OCI-LY7 (cell line): ENCODE measurements at regions of chr3 and their contacts with region 1.

Region 1: DNA sequence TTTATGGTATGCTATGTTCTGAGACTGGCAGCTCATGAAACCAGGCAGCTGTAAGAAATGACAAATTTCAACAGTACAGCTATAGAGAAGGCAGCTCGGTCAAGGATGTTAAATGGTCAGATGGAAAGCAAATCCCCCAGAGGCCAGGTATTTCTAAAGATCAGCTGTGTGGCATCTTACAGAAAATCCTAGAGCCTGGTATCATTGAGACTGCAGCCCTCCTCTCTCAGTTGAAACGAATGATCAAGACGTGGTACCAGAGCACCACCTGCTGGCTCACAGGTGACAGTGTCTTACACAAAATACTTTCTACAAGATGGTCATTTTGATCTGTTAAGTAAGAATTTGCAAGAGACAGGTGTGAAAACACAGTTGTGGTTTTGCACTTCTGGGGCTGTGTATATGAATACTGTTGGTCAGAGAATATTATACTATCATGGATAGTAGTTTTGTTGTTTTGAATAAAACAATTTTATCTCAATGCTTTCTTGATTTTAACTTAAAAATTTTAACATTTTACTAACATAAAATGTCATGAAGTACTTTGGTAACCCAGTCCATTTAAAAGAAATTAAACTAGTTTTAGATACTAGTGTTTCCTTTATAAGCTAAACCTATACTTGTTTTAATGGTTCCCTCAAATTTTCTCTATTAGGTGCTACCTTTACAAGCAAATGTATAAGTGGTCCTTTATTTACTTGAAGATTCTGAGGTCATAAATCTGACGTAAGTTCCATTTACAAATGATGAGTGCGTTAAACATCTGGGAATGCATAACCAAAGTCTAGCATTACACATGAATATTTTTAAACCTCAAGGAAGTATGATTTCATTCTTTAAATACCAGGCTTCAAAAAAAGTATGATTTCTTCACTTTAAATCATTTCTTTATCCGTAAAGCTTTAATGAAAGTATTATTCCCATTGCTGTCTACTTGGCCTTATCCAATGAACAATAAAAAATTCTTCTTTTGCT is 121.8 kb downstream of the PDZRN3 start:
- DNase-seq: peak; percentile 68
- H3K4me3 ChIP-seq: no peak overlapping the region
- H3K27ac ChIP-seq: no peak overlapping the region
- H3K4me1 ChIP-seq: no peaks in the 10 kb centered on the region
- CTCF ChIP-seq: peak; percentile 89

Region 2: DNA sequence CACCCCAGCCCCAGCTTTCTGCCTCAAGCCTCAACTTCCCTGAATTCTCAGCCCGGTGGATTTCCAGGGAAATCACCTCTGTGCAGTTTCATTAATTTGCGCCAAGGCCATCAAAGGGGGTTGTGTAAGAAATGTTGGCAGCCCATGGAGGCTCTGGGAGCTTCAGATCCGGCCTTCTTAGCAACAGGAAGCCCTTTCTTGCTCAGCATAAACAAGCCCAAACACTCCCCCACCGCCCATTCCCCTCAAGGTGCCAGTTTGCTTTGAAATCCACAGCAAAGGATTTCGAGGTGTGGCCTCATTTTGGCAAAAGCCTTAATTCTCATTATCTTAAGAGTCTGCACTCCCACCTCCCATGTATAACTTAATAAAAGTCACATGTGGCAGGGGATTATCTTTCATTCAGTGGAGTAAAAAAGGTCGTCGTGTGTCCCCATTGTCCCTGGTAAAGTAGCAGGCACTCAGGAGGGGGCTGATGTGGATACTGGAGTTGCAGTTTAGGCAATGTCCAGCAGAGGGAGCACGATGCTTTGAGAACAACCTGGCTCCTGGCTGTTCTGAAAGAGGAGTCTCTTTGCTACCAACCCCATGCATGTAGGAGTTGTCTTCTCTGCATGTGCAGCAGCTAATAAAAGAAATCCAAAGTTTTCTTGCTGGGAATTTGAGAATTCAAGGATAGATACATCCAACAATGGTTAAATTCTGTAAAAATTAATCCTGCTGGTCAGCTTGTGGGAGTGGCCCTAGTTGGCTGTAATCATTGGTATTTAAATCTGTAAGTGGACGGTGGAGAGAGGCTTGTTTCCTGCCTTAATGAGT is 401.9 kb before region 1 on chr3:
- CTCF ChIA-PET with region 1: no interaction called
- POLR2A ChIA-PET with region 1: no interaction called
- intact Hi-C with region 1: loop called (anchors 1 kb)
- DNase-seq: peak; percentile 78
- H3K4me3 ChIP-seq: no peak overlapping the region
- H3K27ac ChIP-seq: no peak overlapping the region
- H3K4me1 ChIP-seq: no peaks in the 10 kb centered on the region
- CTCF ChIP-seq: peak; percentile 94

Region 3: DNA sequence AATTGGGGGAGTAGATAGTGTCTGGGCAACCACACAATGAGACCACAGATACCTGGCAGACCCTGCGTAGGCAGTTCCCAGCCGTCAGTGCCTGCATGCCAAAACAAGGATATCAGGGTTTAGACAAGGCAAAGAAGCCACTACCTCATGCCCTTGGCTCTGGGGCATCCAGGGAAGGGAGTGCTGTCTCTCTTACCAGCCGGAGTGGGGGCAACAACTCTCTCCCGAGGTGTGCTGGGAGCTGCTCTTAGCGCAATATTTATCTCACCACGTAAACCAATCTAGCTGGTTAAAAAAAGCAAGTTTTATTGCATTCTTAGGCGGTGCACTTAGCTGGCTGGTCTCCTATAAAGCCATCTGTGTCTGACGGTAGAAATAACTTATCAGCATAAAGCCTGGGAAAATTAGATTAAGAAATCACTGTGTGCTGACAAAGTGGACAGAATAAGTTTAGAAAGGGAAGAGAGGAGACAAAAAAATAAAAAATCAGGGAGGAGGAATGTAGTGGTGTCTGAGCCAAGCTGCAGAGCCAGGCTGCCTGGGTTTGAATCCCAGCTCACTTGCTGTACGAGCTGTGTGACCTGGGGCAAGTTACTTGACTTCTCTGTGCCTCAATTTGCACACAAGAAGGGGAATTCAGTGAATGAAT is 151.3 kb before region 1 on chr3:
- CTCF ChIA-PET with region 1: no interaction called
- POLR2A ChIA-PET with region 1: no interaction called
- intact Hi-C with region 1: loop called (anchors 10 kb)
- DNase-seq: no peak
- H3K4me3 ChIP-seq: no peak overlapping the region
- H3K27ac ChIP-seq: no peak overlapping the region
- H3K4me1 ChIP-seq: no peaks in the 10 kb centered on the region
- CTCF ChIP-seq: no peak

Region 4: DNA sequence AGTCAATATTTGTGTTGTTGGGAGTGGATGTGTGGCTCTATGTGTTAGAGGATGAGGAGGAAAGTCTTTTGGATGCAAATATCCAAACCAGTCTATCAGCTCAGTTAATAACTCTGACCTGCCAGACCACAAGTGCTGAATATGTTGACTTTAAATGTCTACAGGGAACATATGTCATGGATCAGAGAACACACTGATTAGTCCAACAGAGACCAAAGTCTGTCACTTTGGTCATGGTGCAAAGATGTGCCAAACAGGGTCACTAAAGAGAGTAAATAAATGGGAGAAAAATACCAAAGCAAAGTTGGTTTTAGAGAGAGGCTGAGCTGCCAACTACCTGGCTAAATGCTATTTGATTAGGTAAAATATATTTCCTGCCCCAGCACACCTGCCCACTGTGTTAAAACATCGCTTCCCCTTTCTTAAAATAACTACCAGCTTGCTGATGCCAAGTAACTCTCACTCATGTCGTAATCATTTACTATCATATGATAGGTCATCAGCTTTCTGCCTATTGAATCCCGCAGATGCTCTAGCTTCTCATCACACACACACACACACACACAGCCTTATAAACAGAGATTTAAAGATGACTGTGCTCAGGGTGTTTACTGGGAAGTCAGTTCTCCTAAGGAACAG is 51.5 kb before region 1 on chr3:
- CTCF ChIA-PET with region 1: interaction called, 3 read pairs
- POLR2A ChIA-PET with region 1: interaction called, 10 read pairs
- intact Hi-C with region 1: loop called (anchors 1 kb)
- DNase-seq: peak; percentile 64
- H3K4me3 ChIP-seq: peak overlapping the region; percentile 37
- H3K27ac ChIP-seq: peak overlapping the region; percentile 57
- H3K4me1 ChIP-seq: peaks cover 46% of the 10 kb centered on the region
- CTCF ChIP-seq: no peak